ENCODE measurements at regions of chr17 and their contacts with region 1.

Region 1: GRCh38 chr17:48002266-48002915 is 31.5 kb downstream of the CDK5RAP3 start:
- DNase-seq: no peak
- H3K4me3 ChIP-seq: peak overlapping the region in 1 of 2 experiments; percentile 43; a peak in 2 of 4 replicates
- H3K27ac ChIP-seq: peak overlapping the region; percentile 99 to 100
- H3K4me1 ChIP-seq: peaks cover 61 to 65% of the 10 kb centered on the region in 2 experiments
- H3K27me3 ChIP-seq: no peaks in the 10 kb centered on the region
- CTCF ChIP-seq: no peak
- EP300 ChIP-seq: no peak
- RAD21 ChIP-seq: no peak

Region 2: DNA sequence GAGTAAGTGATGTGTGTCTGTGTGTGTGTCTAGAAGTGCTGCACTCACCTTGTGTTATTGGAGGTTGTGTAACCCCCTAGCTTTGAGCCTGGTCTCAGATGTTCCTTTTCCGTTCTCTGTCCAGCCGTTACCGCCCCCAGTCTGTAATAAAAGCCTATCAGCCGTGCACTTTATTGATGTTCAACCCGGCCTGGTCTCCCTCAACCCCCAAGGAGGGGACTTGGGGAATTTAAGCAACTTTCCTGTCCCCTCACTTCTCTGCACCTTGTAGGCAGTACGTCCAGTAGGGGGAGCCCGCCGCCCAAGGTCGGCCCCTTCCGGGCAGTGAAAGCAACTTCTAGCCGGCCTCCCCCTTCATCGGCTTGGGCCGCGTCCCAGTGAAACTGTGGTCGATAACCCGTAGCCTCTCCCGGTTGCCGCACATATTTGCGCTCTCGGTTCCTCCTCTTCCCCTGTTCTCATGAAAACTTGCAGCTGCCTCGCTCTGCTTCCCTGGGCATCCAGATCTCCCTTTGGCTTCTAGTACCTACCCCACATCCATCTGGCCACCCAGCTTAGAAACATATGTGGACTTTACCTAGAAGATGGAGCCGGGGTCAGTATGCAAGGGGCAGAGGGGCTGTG is 53.1 kb before region 1 on chr17:
- CTCF ChIA-PET with region 1: interaction called, 17 read pairs
- POLR2A ChIA-PET with region 1: no interaction called
- DNase-seq: peak; percentile 90
- H3K4me3 ChIP-seq: peak overlapping the region; percentile 28 to 29
- H3K27ac ChIP-seq: peak overlapping the region; percentile 29 to 75; a peak in 3 of 4 replicates
- H3K4me1 ChIP-seq: peaks cover 4 to 11% of the 10 kb centered on the region in 2 experiments; a peak in 3 of 4 replicates
- H3K27me3 ChIP-seq: no peaks in the 10 kb centered on the region
- CTCF ChIP-seq: peak; percentile 100
- EP300 ChIP-seq: no peak
- RAD21 ChIP-seq: peak; percentile 91

Measured in SK-N-SH (cell line).